RWPE1 (cell line): ENCODE measurements at regions of chr16 and their contacts with region 1.

Region 1: GRCh38 chr16:67672739-67673662 is 6.4 kb downstream of the C16orf86 start:
- DNase-seq: peak; percentile 64
- H3K27ac ChIP-seq: peak overlapping the region; percentile 60
- CTCF ChIP-seq: peak; percentile 59

Region 2: DNA sequence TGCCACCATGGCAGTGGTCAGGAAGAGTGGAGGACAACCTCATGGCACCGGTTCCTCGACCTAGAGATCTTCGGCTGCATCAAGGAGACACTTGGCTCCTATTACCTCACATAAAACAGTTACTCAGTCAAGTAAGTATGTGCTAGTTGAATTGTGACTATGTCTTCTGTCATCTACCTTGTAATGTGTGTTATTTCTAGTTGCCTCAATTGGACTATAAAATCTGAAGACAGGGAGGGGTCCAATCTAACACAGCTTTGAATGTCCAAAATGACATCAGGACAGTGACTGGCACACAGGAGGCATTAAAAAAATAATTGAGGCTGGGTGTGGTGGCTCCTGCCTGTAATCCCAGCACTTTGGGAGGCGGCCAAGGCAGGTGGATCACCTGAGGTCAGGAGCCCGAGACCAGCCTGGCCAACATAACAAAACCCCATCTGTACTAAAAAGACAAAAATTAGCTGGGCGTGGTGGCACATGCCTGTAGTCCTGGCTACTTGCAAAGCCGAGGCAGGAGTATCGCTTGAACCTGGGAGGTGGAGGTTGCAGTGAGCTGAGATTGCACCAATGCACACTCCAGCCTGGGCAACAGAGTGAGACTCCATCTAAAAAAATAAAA is 10.9 kb after region 1 on chr16:
- CTCF ChIA-PET with region 1: interaction called, 15 read pairs
- POLR2A ChIA-PET with region 1: no interaction called
- DNase-seq: no peak
- H3K27ac ChIP-seq: no peak overlapping the region
- CTCF ChIP-seq: no peak